Gastrocnemius medialis (tissue), 4 donors: ENCODE measurements at regions of chr2 and their contacts with region 1.

Region 1: DNA sequence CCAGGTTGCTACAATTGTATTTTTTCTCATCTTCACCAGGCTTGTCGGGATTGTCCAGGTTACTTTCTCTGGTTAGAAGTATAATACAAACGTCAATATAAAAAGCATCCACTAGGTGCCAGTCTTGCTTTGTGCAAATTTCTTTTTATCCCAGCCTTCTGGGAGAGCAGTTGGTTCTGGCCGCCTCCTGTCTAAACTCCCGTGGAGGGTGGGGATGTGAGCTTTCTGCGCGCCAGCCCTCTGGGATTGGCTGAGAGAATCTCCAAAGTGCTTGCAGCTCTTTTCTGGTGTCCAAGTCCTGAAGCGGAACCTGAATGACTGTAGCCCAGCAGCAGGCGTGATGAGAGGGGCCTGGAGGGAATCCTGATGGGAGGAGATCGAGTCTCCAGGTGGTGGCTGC is 22.4 kb upstream of the TOGARAM2 start:
- DNase-seq: peak; percentile 74 to 84
- ATAC-seq: peak; percentile 87 to 88
- H3K4me3 ChIP-seq: peak overlapping the region in 2 of 4 donors; percentile 2 to 6
- H3K27ac ChIP-seq: peak overlapping the region; percentile 67 to 86 (median 80)
- H3K4me1 ChIP-seq: peaks cover 6 to 10% of the 10 kb centered on the region in 2 donors
- H3K27me3 ChIP-seq: no peaks in the 10 kb centered on the region
- CTCF ChIP-seq: peak; percentile 75 to 86 (median 81)
- POLR2A ChIP-seq: peak; percentile 52 to 53

Region 2: DNA sequence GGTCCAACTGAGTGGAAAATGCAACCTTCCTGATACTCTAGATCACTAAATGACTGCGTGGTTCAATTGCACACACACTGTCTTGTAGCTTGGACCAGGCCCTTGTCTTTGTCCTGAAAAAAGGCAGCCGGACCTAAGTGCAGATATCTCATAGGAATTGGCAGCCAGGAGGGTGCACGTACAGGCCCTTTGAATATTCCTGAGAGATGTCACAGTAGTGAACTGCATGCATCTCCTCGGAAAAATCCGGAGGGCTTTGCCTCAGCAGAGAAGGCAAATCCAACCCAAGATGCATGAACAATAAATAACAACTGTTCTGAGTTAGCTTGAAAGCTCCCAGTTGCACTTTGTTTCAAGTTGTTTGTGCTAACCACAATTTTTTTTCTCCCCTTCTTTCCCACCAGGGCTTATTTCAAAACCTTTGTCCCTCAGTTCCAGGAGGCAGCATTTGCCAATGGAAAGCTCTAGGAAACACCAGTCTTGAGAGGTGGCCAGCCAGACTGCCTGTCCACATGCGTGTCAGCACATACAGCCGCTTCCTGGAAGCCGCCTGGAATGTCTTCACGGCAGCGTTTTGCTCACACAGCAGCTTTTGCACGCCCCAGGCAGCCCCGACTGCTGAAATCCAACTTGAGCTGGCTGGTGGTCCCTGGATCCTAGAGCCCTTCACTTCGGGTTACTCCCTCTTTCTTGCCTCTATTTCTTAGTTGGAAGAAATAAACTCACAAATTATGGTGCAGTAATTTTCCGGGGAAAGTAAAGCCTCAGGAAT is 620.5 kb before region 1 on chr2:
- in situ Hi-C with region 1: no loop called
- intact Hi-C with region 1: no loop called
- DNase-seq: peak; percentile 69 to 83
- ATAC-seq: peak; percentile 37 to 42
- H3K4me3 ChIP-seq: no peak overlapping the region
- H3K27ac ChIP-seq: peak overlapping the region; percentile 57 to 89 (median 74)
- H3K4me1 ChIP-seq: peaks cover 79 to 82% of the 10 kb centered on the region in 2 donors
- H3K27me3 ChIP-seq: no peaks in the 10 kb centered on the region
- CTCF ChIP-seq: no peak
- POLR2A ChIP-seq: no peak

Region 3: DNA sequence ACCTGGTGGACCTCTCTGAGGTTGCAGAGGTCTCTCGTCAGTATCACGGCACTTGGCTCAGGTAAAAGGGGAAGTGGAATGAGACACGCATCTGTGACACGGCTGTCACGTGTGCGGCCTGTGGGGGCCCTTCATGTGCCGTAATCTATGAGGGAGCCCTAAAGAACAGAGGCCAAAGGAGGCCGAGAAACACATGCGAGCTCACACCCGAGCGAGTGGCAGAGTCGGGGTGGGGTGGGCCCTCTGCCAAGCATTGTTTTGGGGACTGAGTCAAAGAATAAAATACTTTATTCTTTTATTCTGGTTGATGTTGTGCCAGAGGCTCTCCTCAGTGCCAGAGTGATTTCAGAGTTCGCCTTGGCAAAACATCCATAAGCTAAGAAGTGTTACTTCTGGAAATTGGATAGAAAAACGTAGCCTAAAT is 419.6 kb before region 1 on chr2:
- in situ Hi-C with region 1: no loop called
- intact Hi-C with region 1: no loop called
- DNase-seq: no peak
- ATAC-seq: no peak
- H3K4me3 ChIP-seq: no peak overlapping the region
- H3K27ac ChIP-seq: no peak overlapping the region
- H3K4me1 ChIP-seq: peaks cover 3 to 8% of the 10 kb centered on the region in 2 donors
- H3K27me3 ChIP-seq: no peaks in the 10 kb centered on the region
- CTCF ChIP-seq: no peak
- POLR2A ChIP-seq: no peak

Region 4: DNA sequence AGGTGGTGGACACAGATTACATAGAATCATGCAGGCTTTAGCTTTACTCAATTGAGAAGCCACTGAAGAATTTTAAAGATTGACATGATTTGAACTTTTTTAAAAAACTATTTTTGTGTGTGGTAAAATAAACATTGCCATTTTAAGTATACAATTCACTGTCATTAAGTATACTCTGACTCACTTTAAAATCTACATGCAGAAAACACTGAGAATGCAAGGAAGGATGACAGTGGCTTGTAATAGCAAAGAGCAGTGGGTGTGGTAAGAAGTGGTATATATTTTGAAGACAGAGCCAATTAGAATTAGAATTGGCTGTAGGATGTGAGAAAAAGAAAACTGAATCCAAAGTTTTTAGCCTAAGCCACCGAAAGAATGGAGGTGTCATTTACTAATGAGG is 103.5 kb before region 1 on chr2:
- in situ Hi-C with region 1: no loop called
- intact Hi-C with region 1: no loop called
- DNase-seq: no peak
- ATAC-seq: no peak
- H3K4me3 ChIP-seq: no peak overlapping the region
- H3K27ac ChIP-seq: no peak overlapping the region
- H3K4me1 ChIP-seq: no peaks in the 10 kb centered on the region
- H3K27me3 ChIP-seq: no peaks in the 10 kb centered on the region
- CTCF ChIP-seq: no peak
- POLR2A ChIP-seq: no peak

Region 5: DNA sequence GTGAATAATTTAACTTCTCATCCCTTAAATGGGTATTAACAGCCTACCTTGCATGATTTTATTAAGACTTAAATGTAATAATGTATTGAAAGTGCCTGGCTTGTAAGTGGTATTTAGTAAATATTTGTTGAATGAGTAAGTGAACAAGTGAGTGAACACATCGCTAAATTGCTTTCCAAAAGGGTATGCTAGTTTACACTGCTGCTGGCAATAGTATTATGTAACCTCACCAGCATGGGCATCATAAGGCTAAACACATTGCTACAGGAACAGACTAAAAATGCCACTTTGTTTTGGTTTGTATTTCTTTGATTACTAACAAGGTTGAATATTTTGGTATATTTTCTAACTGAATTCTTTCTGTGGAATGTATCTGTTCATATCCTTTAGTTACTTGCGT is 54.4 kb before region 1 on chr2:
- in situ Hi-C with region 1: no loop called
- intact Hi-C with region 1: no loop called
- DNase-seq: no peak
- ATAC-seq: no peak
- H3K4me3 ChIP-seq: no peak overlapping the region
- H3K27ac ChIP-seq: peak overlapping the region; percentile 48 to 71 (median 60)
- H3K4me1 ChIP-seq: peaks cover 11 to 29% of the 10 kb centered on the region in 2 donors
- H3K27me3 ChIP-seq: no peaks in the 10 kb centered on the region
- CTCF ChIP-seq: no peak
- POLR2A ChIP-seq: no peak

Region 6: GRCh38 chr2:29309090-29310029 is 350.7 kb after region 1 on chr2:
- in situ Hi-C with region 1: no loop called
- intact Hi-C with region 1: loop called (anchors 5 kb)
- DNase-seq: no peak
- ATAC-seq: peak; percentile 65 to 78
- H3K4me3 ChIP-seq: no peak overlapping the region
- H3K27ac ChIP-seq: no peak overlapping the region
- H3K4me1 ChIP-seq: no peaks in the 10 kb centered on the region
- H3K27me3 ChIP-seq: no peaks in the 10 kb centered on the region
- CTCF ChIP-seq: peak; percentile 23 to 66 (median 57)
- POLR2A ChIP-seq: no peak